WTC11 (cell line): ENCODE measurements at regions of chr12 and their contacts with region 1.

Region 1: DNA sequence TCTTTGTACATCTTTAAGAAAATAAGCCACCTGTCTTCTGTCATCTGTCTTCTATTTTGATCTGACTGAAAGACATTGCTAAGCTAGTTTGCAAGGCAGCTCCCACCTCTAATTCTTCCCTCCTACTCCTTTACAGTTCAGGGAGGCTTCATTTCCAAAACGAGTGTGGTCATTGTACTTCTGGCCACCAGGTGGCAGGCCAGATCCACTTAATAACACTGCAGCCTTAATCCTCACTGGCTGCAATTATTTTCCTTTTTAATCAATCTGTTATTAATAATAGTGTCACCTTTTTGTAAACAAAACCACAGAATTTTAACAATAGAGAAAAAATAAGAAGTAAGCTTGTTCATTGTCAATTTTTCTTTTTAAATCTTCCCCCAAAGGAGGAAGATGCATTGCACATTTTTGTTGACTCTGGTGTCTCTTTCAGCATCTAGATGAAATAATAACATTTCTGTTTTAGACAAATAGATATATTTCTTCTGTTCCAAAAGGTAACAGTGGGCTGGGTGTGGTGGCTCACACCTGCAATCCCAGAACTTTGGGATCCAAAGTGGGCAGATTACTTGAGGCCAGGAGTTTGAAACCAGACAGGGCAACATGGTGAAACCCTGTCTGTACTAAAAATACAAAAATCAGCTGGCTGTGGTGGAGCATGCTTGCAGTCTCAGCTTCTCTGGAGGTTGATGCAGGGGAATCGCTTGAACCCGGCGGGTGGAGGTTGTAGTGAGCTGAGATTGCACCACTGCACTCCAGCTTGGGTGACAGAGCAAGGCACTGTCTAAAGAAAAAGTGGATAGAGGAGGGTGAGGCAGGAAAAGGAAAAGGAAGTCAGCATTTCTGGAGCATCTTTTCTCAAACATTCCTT is 23.3 kb downstream of the GABARAPL1 start:
- DNase-seq: no peak
- ATAC-seq: peak; percentile 69
- H3K4me3 Mint-ChIP-seq: no peak overlapping the region
- H3K27ac Mint-ChIP-seq: no peak overlapping the region
- H3K4me1 Mint-ChIP-seq: peaks cover 5% of the 10 kb centered on the region
- H3K27me3 Mint-ChIP-seq: peaks cover 6% of the 10 kb centered on the region
- CTCF ChIP-seq: peak; percentile 89

Region 2: GRCh38 chr12:10562306-10562933 is 326.4 kb after region 1 on chr12:
- CTCF ChIA-PET with region 1: interaction called, 10 read pairs
- POLR2A ChIA-PET with region 1: no interaction called
- DNase-seq: no peak
- ATAC-seq: no peak
- H3K4me3 Mint-ChIP-seq: no peak overlapping the region
- H3K27ac Mint-ChIP-seq: no peak overlapping the region
- H3K4me1 Mint-ChIP-seq: peaks cover 14% of the 10 kb centered on the region
- H3K27me3 Mint-ChIP-seq: no peaks in the 10 kb centered on the region
- CTCF ChIP-seq: peak; percentile 56